ENCODE measurements at regions of chr11 and their contacts with region 1.

Region 1: GRCh38 chr11:32052218-32052617 is 38.7 kb upstream of the RCN1 start:
- DNase-seq: peak; percentile 70
- ATAC-seq: no peak
- H3K4me3 Mint-ChIP-seq: no peak overlapping the region
- H3K27ac Mint-ChIP-seq: no peak overlapping the region
- H3K4me1 Mint-ChIP-seq: no peaks in the 10 kb centered on the region
- H3K27me3 Mint-ChIP-seq: peaks cover 20% of the 10 kb centered on the region

Region 2: DNA sequence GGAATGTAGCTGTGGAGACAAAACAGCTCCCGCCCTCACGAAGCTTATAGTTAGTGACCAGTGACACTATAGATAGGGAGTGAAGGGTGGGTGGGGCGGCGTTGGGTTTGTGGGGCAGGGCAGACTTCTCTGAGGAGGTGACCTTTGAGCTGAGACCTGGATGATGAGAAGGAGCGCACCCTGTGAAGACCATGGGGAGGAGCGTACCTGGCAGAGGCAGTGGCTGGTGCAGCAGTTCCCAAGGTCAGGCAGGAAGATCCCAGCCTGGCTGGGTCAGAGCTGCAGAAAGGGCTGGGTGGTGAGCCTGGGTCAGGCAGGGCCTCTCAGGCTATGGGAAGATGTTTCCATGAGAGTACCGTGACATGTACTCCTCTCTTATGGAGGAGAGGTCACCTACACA is 96.4 kb before region 1 on chr11:
- CTCF ChIA-PET with region 1: no interaction called
- POLR2A ChIA-PET with region 1: no interaction called
- intact Hi-C with region 1: no loop called
- DNase-seq: no peak
- ATAC-seq: no peak
- H3K4me3 Mint-ChIP-seq: no peak overlapping the region
- H3K27ac Mint-ChIP-seq: no peak overlapping the region
- H3K4me1 Mint-ChIP-seq: no peaks in the 10 kb centered on the region
- H3K27me3 Mint-ChIP-seq: no peaks in the 10 kb centered on the region

Region 3: GRCh38 chr11:32065865-32066264 is 13.6 kb after region 1 on chr11:
- CTCF ChIA-PET with region 1: interaction called, 11 read pairs
- POLR2A ChIA-PET with region 1: no interaction called
- intact Hi-C with region 1: no loop called
- DNase-seq: no peak
- ATAC-seq: no peak
- H3K4me3 Mint-ChIP-seq: no peak overlapping the region
- H3K27ac Mint-ChIP-seq: no peak overlapping the region
- H3K4me1 Mint-ChIP-seq: no peaks in the 10 kb centered on the region
- H3K27me3 Mint-ChIP-seq: peaks cover 15% of the 10 kb centered on the region

Region 4: GRCh38 chr11:32162351-32162750 is 110.1 kb after region 1 on chr11:
- CTCF ChIA-PET with region 1: interaction called, 19 read pairs
- POLR2A ChIA-PET with region 1: no interaction called
- intact Hi-C with region 1: no loop called
- DNase-seq: no peak
- ATAC-seq: no peak
- H3K4me3 Mint-ChIP-seq: no peak overlapping the region
- H3K27ac Mint-ChIP-seq: no peak overlapping the region
- H3K4me1 Mint-ChIP-seq: no peaks in the 10 kb centered on the region
- H3K27me3 Mint-ChIP-seq: peaks cover 9% of the 10 kb centered on the region

Region 5: GRCh38 chr11:32176223-32176934 is 124.2 kb after region 1 on chr11:
- CTCF ChIA-PET with region 1: interaction called, 116 read pairs
- POLR2A ChIA-PET with region 1: no interaction called
- intact Hi-C with region 1: loop called (anchors 1 kb)
- DNase-seq: peak; percentile 85
- ATAC-seq: peak; percentile 78
- H3K4me3 Mint-ChIP-seq: no peak overlapping the region
- H3K27ac Mint-ChIP-seq: no peak overlapping the region
- H3K4me1 Mint-ChIP-seq: no peaks in the 10 kb centered on the region
- H3K27me3 Mint-ChIP-seq: peaks cover 7% of the 10 kb centered on the region

Region 6: DNA sequence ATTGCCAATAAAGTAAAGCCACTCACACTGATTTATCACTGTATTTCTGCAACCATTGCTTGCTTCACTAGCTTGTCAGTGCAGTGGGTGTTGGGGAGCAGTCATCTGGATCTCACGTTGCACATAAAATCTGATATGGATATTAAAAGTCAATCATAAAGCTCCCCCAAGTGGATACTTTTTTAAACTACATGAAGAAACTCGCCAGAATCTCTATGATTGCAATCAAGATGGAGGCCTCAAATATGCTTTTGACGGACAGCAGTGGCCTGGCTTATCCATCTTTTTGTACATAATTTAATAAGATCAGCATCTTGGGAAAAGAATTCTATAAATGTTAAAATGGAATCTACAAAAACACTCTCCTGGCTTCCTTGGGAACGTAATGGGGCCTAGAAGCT is 245.4 kb after region 1 on chr11:
- CTCF ChIA-PET with region 1: interaction called, 7 read pairs
- POLR2A ChIA-PET with region 1: no interaction called
- intact Hi-C with region 1: loop called (anchors 1 to 2 kb)
- DNase-seq: peak; percentile 13
- ATAC-seq: peak; percentile 51
- H3K4me3 Mint-ChIP-seq: no peak overlapping the region
- H3K27ac Mint-ChIP-seq: no peak overlapping the region
- H3K4me1 Mint-ChIP-seq: no peaks in the 10 kb centered on the region
- H3K27me3 Mint-ChIP-seq: no peaks in the 10 kb centered on the region

Measured in activated CD4-positive, alpha-beta T cell treated with anti-CD3 and anti-CD28 coated beads for 36 hours (primary cell).